ENCODE measurements at regions of chr1 and their contacts with region 1.

Region 1: GRCh38 chr1:45359882-45360513 is 19.8 kb upstream of the MUTYH start:
- DNase-seq: no peak
- ATAC-seq: peak; percentile 83 to 84
- H3K4me3 ChIP-seq: no peak overlapping the region
- H3K27ac ChIP-seq: peak overlapping the region; percentile 67
- H3K4me1 ChIP-seq: peaks cover 14% of the 10 kb centered on the region
- H3K27me3 ChIP-seq: no peaks in the 10 kb centered on the region
- CTCF ChIP-seq: peak; percentile 70

Region 2: DNA sequence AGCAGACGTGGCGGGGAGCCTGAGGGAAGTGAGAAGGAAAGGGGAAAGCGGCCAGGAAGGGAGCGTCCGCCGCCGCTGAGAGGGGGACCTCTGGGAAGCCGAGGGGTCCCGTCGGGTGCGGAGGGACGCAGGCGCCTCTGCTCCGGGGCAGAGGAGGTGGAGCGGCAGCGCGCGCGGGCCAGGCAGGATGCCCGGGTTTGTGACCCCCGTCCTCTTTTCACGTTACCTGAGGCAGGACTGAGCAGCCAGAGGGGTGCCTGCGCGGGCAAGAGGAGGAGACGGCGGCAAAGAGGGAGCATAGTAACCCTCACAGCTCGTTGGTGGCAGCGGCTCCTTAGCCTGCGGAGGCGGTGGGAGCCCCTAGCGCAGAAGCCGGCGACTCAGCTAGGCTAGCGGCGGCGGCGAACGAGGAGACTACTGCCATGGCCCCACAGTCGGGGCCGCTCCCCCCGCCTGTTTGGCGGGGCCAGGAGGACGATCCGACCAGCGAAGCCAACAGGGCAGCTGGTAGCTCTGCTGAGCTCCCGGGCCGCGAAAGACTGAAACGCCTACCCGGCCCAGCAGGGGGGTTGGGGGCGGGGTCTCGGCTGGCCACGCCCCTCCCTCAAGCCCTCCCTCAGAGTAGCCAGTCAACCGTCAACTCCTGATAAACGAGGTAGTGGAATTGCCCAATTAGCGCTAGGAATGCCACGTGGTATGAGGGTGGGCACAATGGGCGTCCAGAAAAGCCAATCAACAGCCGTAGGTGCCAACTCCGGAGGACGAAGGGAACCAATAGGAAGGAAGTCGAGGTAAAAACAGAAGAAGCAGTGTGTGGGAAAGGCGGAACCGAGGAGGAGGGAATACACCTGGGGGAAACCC is 130.9 kb after region 1 on chr1 and contains the start of gene TESK2:
- intact Hi-C with region 1: loop called (anchors 10 kb)
- DNase-seq: peak; percentile 96
- ATAC-seq: peak; percentile 98 to 99
- H3K4me3 ChIP-seq: peak within 1 kb of the TSS; percentile 86
- H3K27ac ChIP-seq: peak within 1 kb of the TSS; percentile 74
- H3K4me1 ChIP-seq: peaks cover 16% of the 10 kb centered on the region
- H3K27me3 ChIP-seq: no peaks in the 10 kb centered on the region
- CTCF ChIP-seq: peak; percentile 25
- total RNA-seq, gene TESK2: 8.2 TPM

Measured in lower lobe of right lung (tissue), 2 donors.